ENCODE measurements at regions of chr22 and their contacts with region 1.

Region 1: DNA sequence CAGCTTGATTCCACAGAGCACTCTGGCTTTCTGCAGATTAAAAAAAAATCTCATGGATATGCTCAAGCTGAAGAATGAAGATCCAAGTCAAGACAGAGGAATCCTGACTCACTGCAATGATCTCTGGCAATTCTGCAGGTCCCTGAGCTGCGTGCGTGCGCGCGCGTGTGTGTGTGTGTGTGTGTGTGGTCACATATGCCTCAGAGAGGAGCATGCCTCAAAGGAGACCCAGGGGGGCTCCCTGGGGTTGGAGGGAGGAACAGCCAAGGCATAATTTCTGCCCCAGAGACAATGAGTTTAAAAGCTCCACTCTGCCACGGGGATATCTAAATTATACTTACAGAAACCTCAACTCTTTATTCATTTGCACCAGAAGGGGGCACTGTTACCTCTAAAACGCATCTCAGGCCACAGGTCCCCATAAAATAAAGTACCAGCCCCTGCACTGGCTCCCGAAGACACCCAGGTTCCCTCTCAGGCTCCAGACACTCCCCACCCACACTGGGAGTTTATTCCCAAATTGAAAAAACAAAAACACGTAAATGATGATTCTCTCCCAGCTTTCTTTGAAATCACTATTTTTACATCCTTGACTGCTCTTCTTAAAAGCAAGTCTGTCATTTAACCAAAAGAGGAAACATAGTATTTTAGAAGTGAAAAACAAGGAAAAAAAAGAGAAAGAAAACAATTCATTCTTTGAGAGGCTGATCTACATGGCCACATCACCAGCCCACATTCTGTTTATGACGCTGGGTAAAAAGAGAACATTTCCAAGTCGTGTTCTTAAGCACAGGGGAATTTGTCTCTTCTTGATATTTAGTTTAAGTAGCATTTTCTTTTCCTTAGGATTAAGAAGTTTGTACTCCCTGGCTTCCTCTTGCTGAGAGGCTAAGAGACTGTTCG is 401.0 kb downstream of the LARGE1 start:
- DNase-seq: peak; percentile 61
- ATAC-seq: peak; percentile 85
- H3K4me3 ChIP-seq: no peak overlapping the region
- H3K27ac ChIP-seq: no peak overlapping the region
- H3K4me1 ChIP-seq: 0 out of 2 replicates have a peak, but pooled peaks cover 1% of the 10 kb centered on the region
- H3K27me3 ChIP-seq: no peaks in the 10 kb centered on the region
- CTCF ChIP-seq: peak; percentile 73
- POLR2A ChIP-seq: no peak
- RAD21 ChIP-seq: peak; percentile 79

Region 2: GRCh38 chr22:33302049-33302545 is 217.2 kb before region 1 on chr22:
- CTCF ChIA-PET with region 1: interaction called, 6 read pairs
- POLR2A ChIA-PET with region 1: no interaction called
- dilution Hi-C with region 1: no loop called
- in situ Hi-C with region 1: no loop called
- intact Hi-C with region 1: loop called (anchors 1 kb)
- DNase-seq: peak; percentile 60
- ATAC-seq: peak; percentile 99
- H3K4me3 ChIP-seq: no peak overlapping the region
- H3K27ac ChIP-seq: no peak overlapping the region
- H3K4me1 ChIP-seq: no peaks in the 10 kb centered on the region
- H3K27me3 ChIP-seq: no peaks in the 10 kb centered on the region
- CTCF ChIP-seq: peak; percentile 96
- POLR2A ChIP-seq: peak; percentile 65
- RAD21 ChIP-seq: peak; percentile 99

Region 3: DNA sequence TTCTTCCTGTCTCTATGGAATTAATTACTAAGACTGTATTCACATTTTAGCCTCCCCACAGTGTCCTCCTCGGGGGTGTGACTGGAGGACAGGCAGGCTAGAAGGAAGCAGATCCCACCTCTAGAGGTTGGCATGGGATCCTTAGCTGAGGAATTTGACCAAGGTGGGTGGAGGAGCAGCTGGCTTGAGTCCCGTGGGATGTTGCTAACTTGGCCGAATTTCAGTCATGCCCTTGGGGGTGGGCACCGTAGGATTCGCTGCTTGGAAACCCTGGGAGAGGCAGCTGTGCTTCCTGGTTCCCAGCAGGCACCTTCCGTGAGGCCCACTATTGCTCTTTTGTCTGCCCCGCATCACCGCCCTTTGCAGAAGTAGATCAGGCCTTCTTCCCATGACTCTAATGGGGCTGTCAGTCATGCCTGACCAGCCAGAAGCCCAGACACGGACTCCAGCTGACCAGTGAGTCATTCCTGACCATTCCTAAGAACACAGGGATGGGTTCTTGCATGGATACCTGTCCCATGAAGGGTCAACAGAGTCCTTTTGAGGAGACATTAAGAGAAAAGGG is 168.8 kb before region 1 on chr22:
- CTCF ChIA-PET with region 1: no interaction called
- POLR2A ChIA-PET with region 1: no interaction called
- dilution Hi-C with region 1: no loop called
- in situ Hi-C with region 1: no loop called
- intact Hi-C with region 1: no loop called
- DNase-seq: no peak
- ATAC-seq: no peak
- H3K4me3 ChIP-seq: no peak overlapping the region
- H3K27ac ChIP-seq: no peak overlapping the region
- H3K4me1 ChIP-seq: peaks cover 9% of the 10 kb centered on the region
- H3K27me3 ChIP-seq: no peaks in the 10 kb centered on the region
- CTCF ChIP-seq: no peak
- POLR2A ChIP-seq: no peak
- RAD21 ChIP-seq: no peak

Region 4: GRCh38 chr22:33579448-33580093 is 60.2 kb after region 1 on chr22:
- CTCF ChIA-PET with region 1: interaction called, 3 read pairs
- POLR2A ChIA-PET with region 1: no interaction called
- dilution Hi-C with region 1: no loop called
- in situ Hi-C with region 1: no loop called
- intact Hi-C with region 1: loop called (anchors 1 kb)
- DNase-seq: peak; percentile 38
- ATAC-seq: peak; percentile 99
- H3K4me3 ChIP-seq: no peak overlapping the region
- H3K27ac ChIP-seq: no peak overlapping the region
- H3K4me1 ChIP-seq: no peaks in the 10 kb centered on the region
- H3K27me3 ChIP-seq: no peaks in the 10 kb centered on the region
- CTCF ChIP-seq: peak; percentile 80
- POLR2A ChIP-seq: no peak
- RAD21 ChIP-seq: peak; percentile 74

Region 5: GRCh38 chr22:33803371-33804282 is 284.3 kb after region 1 on chr22:
- CTCF ChIA-PET with region 1: no interaction called
- POLR2A ChIA-PET with region 1: no interaction called
- dilution Hi-C with region 1: no loop called
- in situ Hi-C with region 1: no loop called
- intact Hi-C with region 1: loop called (anchors 10 kb)
- DNase-seq: peak; percentile 98
- ATAC-seq: peak; percentile 96
- H3K4me3 ChIP-seq: no peak overlapping the region
- H3K27ac ChIP-seq: peak overlapping the region; percentile 96; the same call in 1 of the 2 replicates
- H3K4me1 ChIP-seq: peaks cover 9% of the 10 kb centered on the region
- H3K27me3 ChIP-seq: no peaks in the 10 kb centered on the region
- CTCF ChIP-seq: no peak
- POLR2A ChIP-seq: no peak
- RAD21 ChIP-seq: no peak; the same call in 1 of the 2 replicates

Region 6: DNA sequence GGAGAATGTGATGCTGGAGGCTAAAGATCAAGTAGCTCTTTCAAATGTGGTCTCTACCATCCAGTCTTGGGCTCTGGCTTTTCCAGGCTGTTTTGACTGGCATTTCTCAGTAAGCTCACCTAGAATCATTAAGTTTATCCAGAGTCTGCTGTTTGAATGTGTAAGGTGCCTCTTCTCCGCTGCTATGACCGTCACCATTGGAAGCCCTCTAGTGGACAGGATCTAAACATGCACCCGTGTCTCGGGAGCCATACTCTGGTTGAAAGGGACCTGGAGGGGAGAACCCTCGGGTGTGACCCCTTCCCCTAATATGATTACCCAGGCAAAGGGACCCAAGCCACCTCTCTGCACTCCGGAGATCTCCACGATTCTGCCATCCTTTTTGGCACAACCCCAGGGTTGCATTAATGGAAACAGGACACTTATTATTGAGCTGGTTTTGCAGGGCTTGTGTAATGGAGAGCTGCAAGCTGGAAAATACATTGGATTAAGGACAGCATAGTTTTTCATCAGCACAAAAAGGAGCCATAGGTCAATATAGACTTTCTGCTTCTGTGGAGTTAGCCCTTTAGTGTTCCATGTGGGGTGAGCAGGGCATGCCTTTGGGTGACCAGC is 592.0 kb after region 1 on chr22:
- CTCF ChIA-PET with region 1: no interaction called
- POLR2A ChIA-PET with region 1: no interaction called
- dilution Hi-C with region 1: no loop called
- in situ Hi-C with region 1: no loop called
- intact Hi-C with region 1: loop called (anchors 1 kb)
- DNase-seq: no peak
- ATAC-seq: peak; percentile 77
- H3K4me3 ChIP-seq: no peak overlapping the region
- H3K27ac ChIP-seq: no peak overlapping the region
- H3K4me1 ChIP-seq: no peaks in the 10 kb centered on the region
- H3K27me3 ChIP-seq: no peaks in the 10 kb centered on the region
- CTCF ChIP-seq: peak; percentile 41
- POLR2A ChIP-seq: no peak
- RAD21 ChIP-seq: peak; percentile 36

Region 7: GRCh38 chr22:35023692-35024363 is 1504.5 kb after region 1 on chr22:
- CTCF ChIA-PET with region 1: no interaction called
- POLR2A ChIA-PET with region 1: no interaction called
- dilution Hi-C with region 1: no loop called
- in situ Hi-C with region 1: loop called (anchors 25 kb)
- intact Hi-C with region 1: no loop called
- DNase-seq: no peak
- ATAC-seq: no peak
- H3K4me3 ChIP-seq: no peak overlapping the region
- H3K27ac ChIP-seq: no peak overlapping the region
- H3K4me1 ChIP-seq: no peaks in the 10 kb centered on the region
- H3K27me3 ChIP-seq: no peaks in the 10 kb centered on the region
- CTCF ChIP-seq: peak; percentile 60
- POLR2A ChIP-seq: no peak
- RAD21 ChIP-seq: peak; percentile 65

Region 8: GRCh38 chr22:35150183-35151107 is 1631.1 kb after region 1 on chr22:
- CTCF ChIA-PET with region 1: no interaction called
- POLR2A ChIA-PET with region 1: no interaction called
- dilution Hi-C with region 1: no loop called
- in situ Hi-C with region 1: loop called (anchors 10 kb)
- intact Hi-C with region 1: loop called (anchors 2 kb)
- DNase-seq: peak; percentile 42
- ATAC-seq: peak; percentile 77
- H3K4me3 ChIP-seq: no peak overlapping the region
- H3K27ac ChIP-seq: no peak overlapping the region
- H3K4me1 ChIP-seq: no peaks in the 10 kb centered on the region
- H3K27me3 ChIP-seq: peaks cover 4% of the 10 kb centered on the region
- CTCF ChIP-seq: peak; percentile 60
- POLR2A ChIP-seq: no peak
- RAD21 ChIP-seq: peak; percentile 44

Measured in IMR-90 (cell line).